CD4-positive, alpha-beta memory T cell (primary cell): ENCODE measurements at regions of chr9 and their contacts with region 1.

Region 1: GRCh38 chr9:93064392-93065134 is 6.1 kb downstream of the SUSD3 start:
- DNase-seq: peak; percentile 90 to 96 (median 92)
- H3K4me3 ChIP-seq: peak overlapping the region in 1 of 2 donors; percentile 47
- H3K4me3 Mint-ChIP-seq: peak overlapping the region; percentile 87 to 95 (median 91)
- H3K27ac ChIP-seq: peak overlapping the region; percentile 72
- H3K27ac Mint-ChIP-seq: peak overlapping the region; percentile 96 to 100 (median 99)
- H3K4me1 ChIP-seq: peaks cover 98% of the 10 kb centered on the region
- H3K4me1 Mint-ChIP-seq: peaks cover 68 to 97% (median 82%) of the 10 kb centered on the region in 4 donors
- H3K27me3 ChIP-seq: no peaks in the 10 kb centered on the region
- H3K27me3 Mint-ChIP-seq: no peaks in the 10 kb centered on the region

Region 2: GRCh38 chr9:92807757-92808725 is 256.5 kb before region 1 on chr9:
- CTCF ChIA-PET with region 1: no interaction called
- POLR2A ChIA-PET with region 1: no interaction called
- intact Hi-C with region 1: no loop called
- DNase-seq: peak in 4 of 5 donors; percentile 33 to 45 (median 41)
- H3K4me3 ChIP-seq: peak overlapping the region in 1 of 2 donors; percentile 47
- H3K4me3 Mint-ChIP-seq: peak overlapping the region; percentile 65 to 98 (median 82)
- H3K27ac ChIP-seq: no peak overlapping the region
- H3K27ac Mint-ChIP-seq: no peak overlapping the region
- H3K4me1 ChIP-seq: peaks cover 31% of the 10 kb centered on the region
- H3K4me1 Mint-ChIP-seq: peaks cover 6 to 20% (median 13%) of the 10 kb centered on the region in 4 donors
- H3K27me3 ChIP-seq: peaks cover 43% of the 10 kb centered on the region
- H3K27me3 Mint-ChIP-seq: peaks cover 30 to 34% of the 10 kb centered on the region in 2 donors

Region 3: GRCh38 chr9:93028448-93029006 is 36.0 kb before region 1 on chr9:
- CTCF ChIA-PET with region 1: interaction called, 13 read pairs
- POLR2A ChIA-PET with region 1: interaction called, 654 read pairs
- intact Hi-C with region 1: loop called (anchors 1 kb)
- DNase-seq: peak; percentile 84 to 94 (median 89)
- H3K4me3 ChIP-seq: peak overlapping the region; percentile 52 to 55
- H3K4me3 Mint-ChIP-seq: peak overlapping the region; percentile 82 to 90 (median 86)
- H3K27ac ChIP-seq: peak overlapping the region; percentile 91
- H3K27ac Mint-ChIP-seq: peak overlapping the region; percentile 94 to 99 (median 96)
- H3K4me1 ChIP-seq: peaks cover 95% of the 10 kb centered on the region
- H3K4me1 Mint-ChIP-seq: peaks cover 43 to 95% (median 78%) of the 10 kb centered on the region in 4 donors
- H3K27me3 ChIP-seq: no peaks in the 10 kb centered on the region
- H3K27me3 Mint-ChIP-seq: no peaks in the 10 kb centered on the region

Region 4: DNA sequence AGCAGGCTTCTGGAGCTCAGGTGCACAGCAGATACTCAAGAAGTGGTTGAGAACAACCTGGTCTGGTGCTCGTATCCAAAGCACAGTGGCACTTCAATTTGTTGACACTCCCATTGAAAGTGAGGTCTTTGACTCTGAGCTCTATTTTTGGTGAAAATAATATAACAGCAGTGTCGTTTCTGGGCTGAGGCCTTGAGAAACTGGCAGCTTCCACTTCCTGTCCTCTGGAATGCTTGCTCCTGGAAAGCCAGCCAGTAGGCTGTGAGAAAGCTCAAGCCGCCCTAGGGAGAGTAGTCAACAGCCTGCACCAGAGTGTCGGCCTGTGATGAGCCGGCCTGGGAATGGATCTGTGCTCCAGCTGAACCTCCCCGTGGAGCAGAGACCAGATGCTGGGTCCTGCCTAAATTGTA is 12.9 kb before region 1 on chr9:
- CTCF ChIA-PET with region 1: interaction called, 7 read pairs
- POLR2A ChIA-PET with region 1: interaction called, 25 read pairs
- intact Hi-C with region 1: no loop called
- DNase-seq: no peak
- H3K4me3 ChIP-seq: no peak overlapping the region
- H3K4me3 Mint-ChIP-seq: no peak overlapping the region
- H3K27ac ChIP-seq: no peak overlapping the region
- H3K27ac Mint-ChIP-seq: peak overlapping the region in 2 of 7 donors; percentile 49 to 84
- H3K4me1 ChIP-seq: peaks cover 24% of the 10 kb centered on the region
- H3K4me1 Mint-ChIP-seq: peaks cover 9 to 49% (median 20%) of the 10 kb centered on the region in 4 donors
- H3K27me3 ChIP-seq: no peaks in the 10 kb centered on the region
- H3K27me3 Mint-ChIP-seq: no peaks in the 10 kb centered on the region

Region 5: GRCh38 chr9:93082841-93083411 is 18.4 kb after region 1 on chr9:
- CTCF ChIA-PET with region 1: interaction called, 4 read pairs
- POLR2A ChIA-PET with region 1: interaction called, 28 read pairs
- intact Hi-C with region 1: no loop called
- DNase-seq: no peak
- H3K4me3 ChIP-seq: no peak overlapping the region
- H3K4me3 Mint-ChIP-seq: peak overlapping the region in 1 of 8 donors; percentile 81
- H3K27ac ChIP-seq: peak overlapping the region; percentile 55
- H3K27ac Mint-ChIP-seq: peak overlapping the region in 5 of 7 donors; percentile 35 to 95 (median 82)
- H3K4me1 ChIP-seq: peaks cover 31% of the 10 kb centered on the region
- H3K4me1 Mint-ChIP-seq: peaks cover 15 to 42% (median 20%) of the 10 kb centered on the region in 4 donors
- H3K27me3 ChIP-seq: no peaks in the 10 kb centered on the region
- H3K27me3 Mint-ChIP-seq: no peaks in the 10 kb centered on the region

Region 6: DNA sequence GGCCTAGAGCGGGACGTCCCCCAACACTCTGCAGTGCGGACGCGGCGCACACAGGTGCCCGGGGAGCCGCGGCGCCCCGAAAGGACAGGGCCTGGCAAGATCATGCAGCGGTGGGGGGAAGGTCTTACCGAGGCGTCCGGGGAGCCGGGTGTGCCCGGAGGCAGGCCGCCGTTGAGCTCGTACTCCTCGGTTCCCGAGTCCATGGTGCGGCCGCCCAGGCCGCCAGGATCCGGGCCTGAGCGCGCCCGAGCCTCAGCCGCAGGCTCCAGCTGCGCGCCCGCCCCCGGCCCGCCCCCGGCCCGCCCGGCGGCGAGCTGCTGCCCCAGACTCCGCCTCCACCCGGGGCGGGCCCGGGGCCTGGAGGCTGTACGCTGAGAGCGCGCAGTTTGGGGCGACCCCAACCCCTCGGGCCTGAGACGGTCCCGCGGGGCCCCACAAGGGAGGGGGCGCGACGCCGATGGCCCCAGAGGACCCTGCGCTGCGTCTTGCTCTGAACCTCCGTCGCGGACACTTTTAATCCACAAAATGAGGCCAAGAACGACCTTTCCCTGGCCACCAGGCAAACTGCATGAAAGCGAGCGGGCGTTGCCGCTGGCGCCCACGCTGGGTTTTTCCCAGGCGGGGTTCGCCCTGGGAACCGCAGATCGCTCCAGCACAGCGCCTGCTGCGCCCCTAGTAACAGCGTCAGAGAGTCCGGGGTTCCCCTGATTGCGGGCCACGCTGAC is 69.6 kb after region 1 on chr9 and contains the start of gene NINJ1:
- CTCF ChIA-PET with region 1: no interaction called
- POLR2A ChIA-PET with region 1: interaction called, 17 read pairs
- intact Hi-C with region 1: loop called (anchors 5 kb)
- DNase-seq: peak; percentile 87 to 96 (median 89)
- H3K4me3 ChIP-seq: peak within 1 kb of the TSS; percentile 52 to 82
- H3K4me3 Mint-ChIP-seq: peak within 1 kb of the TSS; percentile 88 to 96 (median 90)
- H3K27ac ChIP-seq: peak within 1 kb of the TSS; percentile 92
- H3K27ac Mint-ChIP-seq: peak within 1 kb of the TSS; percentile 97 to 99 (median 99)
- H3K4me1 ChIP-seq: peaks cover 48% of the 10 kb centered on the region
- H3K4me1 Mint-ChIP-seq: peaks cover 26 to 79% (median 50%) of the 10 kb centered on the region in 4 donors
- H3K27me3 ChIP-seq: no peaks in the 10 kb centered on the region
- H3K27me3 Mint-ChIP-seq: no peaks in the 10 kb centered on the region
- total RNA-seq, gene NINJ1: 31.1 to 31.3 TPM

Region 7: DNA sequence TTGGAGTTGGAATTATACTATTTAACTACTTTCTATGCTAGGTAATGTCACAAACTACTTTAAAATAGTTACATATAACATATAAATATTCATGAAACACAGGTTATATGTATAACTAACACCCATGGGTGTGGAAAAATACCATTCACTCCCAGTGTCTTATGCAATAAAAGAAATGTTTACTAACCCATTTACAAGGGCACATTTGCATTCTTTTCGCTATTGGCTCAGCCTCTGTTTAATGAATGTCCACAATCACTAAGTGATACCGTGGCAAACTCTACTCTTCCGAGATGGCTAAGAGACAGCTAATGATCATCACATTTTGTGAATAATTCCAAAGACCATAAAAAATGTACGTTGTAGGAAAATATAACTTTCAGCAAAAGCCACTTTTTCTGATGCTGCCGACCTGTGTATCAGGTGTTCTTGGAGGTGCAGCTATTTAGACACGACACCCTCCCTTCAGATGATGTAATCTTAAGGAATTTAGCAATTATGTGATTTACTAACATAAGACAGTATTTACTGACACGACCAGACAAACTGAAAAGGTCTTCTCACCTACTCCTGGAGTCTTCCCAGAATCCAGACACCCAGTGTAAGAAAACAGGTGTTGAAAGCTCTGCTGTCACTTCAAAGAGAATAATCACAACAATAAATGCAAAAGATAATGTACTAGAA is 265.2 kb after region 1 on chr9:
- CTCF ChIA-PET with region 1: no interaction called
- POLR2A ChIA-PET with region 1: no interaction called
- intact Hi-C with region 1: no loop called
- DNase-seq: no peak
- H3K4me3 ChIP-seq: no peak overlapping the region
- H3K4me3 Mint-ChIP-seq: no peak overlapping the region
- H3K27ac ChIP-seq: no peak overlapping the region
- H3K27ac Mint-ChIP-seq: no peak overlapping the region
- H3K4me1 ChIP-seq: no peaks in the 10 kb centered on the region
- H3K4me1 Mint-ChIP-seq: no peaks in the 10 kb centered on the region
- H3K27me3 ChIP-seq: no peaks in the 10 kb centered on the region
- H3K27me3 Mint-ChIP-seq: peaks cover 3 to 18% of the 10 kb centered on the region in 2 donors